ENCODE measurements at regions of chr19 and their contacts with region 1.

Region 1: GRCh38 chr19:21020298-21021227 is at the start of gene ZNF430:
- DNase-seq: peak; percentile 84 to 98
- H3K4me3 ChIP-seq: peak within 1 kb of the TSS; percentile 93
- H3K27ac ChIP-seq: peak within 1 kb of the TSS; percentile 75 to 88
- H3K4me1 ChIP-seq: peaks cover 0 to 4% of the 10 kb centered on the region in 2 donors
- H3K27me3 ChIP-seq: no peaks in the 10 kb centered on the region
- CTCF ChIP-seq: no peak
- total RNA-seq, gene ZNF430: 5.3 TPM

Region 2: GRCh38 chr19:20776083-20777076 is 244.2 kb before region 1 on chr19 and contains the start of gene ZNF66:
- intact Hi-C with region 1: loop called (anchors 2 kb)
- DNase-seq: peak; percentile 88 to 98
- H3K4me3 ChIP-seq: peak within 1 kb of the TSS; percentile 56 to 75
- H3K27ac ChIP-seq: peak within 1 kb of the TSS; percentile 4 to 34
- H3K4me1 ChIP-seq: peaks cover 0 to 2% of the 10 kb centered on the region in 2 donors
- H3K27me3 ChIP-seq: no peaks in the 10 kb centered on the region
- CTCF ChIP-seq: no peak
- total RNA-seq, gene ZNF66: 0.32 TPM

Region 3: DNA sequence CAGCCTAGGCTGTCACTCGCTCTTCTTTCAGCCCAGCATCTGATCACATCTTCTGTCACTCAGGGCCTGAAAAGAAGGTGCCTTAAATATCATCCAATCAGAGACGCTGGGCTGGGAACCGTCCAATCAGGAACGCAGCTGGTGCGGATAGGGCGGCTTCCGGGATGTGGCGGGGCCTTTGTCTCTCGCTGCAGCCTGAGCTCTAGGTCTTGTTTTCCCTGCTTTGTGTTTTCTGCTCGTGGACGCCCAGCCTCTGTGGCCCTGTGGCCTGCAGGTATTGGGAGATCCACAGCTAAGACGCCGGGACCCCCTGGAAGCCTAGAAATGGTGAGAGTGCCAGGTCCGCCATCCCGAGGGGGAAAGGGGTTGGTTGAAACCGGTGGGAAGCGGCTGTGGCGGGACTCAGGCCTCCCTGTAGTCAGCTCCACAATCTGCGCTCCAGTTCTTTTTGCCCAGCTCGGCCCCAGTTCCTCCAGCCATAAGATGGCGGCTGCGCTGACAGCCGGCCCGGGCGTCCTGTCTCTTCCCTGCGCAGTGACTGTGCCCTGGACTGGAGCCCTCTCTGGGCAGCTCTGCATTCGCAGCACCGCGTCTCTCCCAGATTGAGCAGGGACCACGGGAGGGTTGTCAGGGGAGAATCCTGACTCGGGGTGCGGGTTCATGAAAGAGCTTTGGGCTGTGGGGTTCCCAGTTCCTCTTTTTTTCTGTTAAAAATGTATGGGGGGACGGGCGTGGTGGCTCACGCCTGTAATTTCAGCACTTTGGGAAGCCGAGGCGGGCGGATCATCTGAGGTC is 97.3 kb before region 1 on chr19 and contains the start of gene ZNF85:
- intact Hi-C with region 1: loop called (anchors 10 kb)
- DNase-seq: peak; percentile 69 to 94
- H3K4me3 ChIP-seq: peak within 1 kb of the TSS; percentile 70 to 74
- H3K27ac ChIP-seq: peak within 1 kb of the TSS; percentile 72 to 90
- H3K4me1 ChIP-seq: peaks cover 0 to 4% of the 10 kb centered on the region in 2 donors
- H3K27me3 ChIP-seq: no peaks in the 10 kb centered on the region
- CTCF ChIP-seq: no peak
- total RNA-seq, gene ZNF85: 0.96 TPM

Region 4: GRCh38 chr19:21141787-21142464 is 121.4 kb after region 1 on chr19 and contains the start of gene ZNF431:
- intact Hi-C with region 1: loop called (anchors 2 kb)
- DNase-seq: peak; percentile 78 to 95
- H3K4me3 ChIP-seq: peak within 1 kb of the TSS; percentile 74 to 82
- H3K27ac ChIP-seq: peak within 1 kb of the TSS; percentile 68 to 70
- H3K4me1 ChIP-seq: peaks cover 0 to 5% of the 10 kb centered on the region in 2 donors
- H3K27me3 ChIP-seq: no peaks in the 10 kb centered on the region
- CTCF ChIP-seq: no peak
- total RNA-seq, gene ZNF431: 10.2 TPM

Measured in ascending aorta (tissue), 2 donors.